ENCODE measurements at regions of chr5 and their contacts with region 1.

Region 1: DNA sequence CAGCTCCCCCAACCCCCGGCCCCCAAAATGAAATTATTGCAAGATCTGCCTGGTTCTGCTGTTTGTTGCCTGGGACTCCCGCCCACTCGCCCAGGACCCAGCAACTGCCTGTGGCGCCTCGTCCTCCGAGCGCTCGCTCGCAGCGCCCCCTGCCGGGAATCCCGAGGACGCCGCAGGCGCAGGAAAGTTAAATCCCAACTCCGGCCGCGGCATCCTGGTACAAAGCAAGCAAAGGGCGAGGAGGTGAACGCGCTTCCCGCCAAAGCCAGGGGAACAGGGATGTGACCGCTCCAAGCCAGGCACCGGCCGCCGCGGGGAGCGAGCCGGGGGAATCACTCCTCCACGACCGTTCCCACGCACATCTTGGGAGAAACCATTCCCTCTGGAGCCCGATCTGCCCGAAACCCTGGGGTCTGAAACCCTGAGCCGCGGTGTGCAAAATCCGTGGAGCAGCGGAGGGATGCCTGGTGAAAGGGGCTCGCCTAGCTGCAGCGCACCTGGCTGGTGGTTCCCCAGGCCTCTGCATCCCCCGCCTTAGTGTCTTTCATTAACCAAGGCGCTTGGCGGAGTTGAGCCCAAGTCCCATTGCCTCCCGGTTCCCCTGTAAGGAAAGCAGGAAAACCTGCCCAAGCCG is 1.3 kb downstream of the SEMA5A start:
- DNase-seq: peak; percentile 80
- ATAC-seq: peak; percentile 48
- H3K4me3 ChIP-seq: peak overlapping the region; percentile 73
- H3K27ac ChIP-seq: peak overlapping the region; percentile 35
- H3K4me1 ChIP-seq: peaks cover 4% of the 10 kb centered on the region
- H3K27me3 ChIP-seq: no peaks in the 10 kb centered on the region
- CTCF ChIP-seq: peak; percentile 96
- POLR2A ChIP-seq: 0 out of 2 replicates have a peak, but pooled peaks have one; percentile 42
- RAD21 ChIP-seq: peak; percentile 91

Region 2: GRCh38 chr5:7927466-7928375 is 1616.9 kb before region 1 on chr5:
- CTCF ChIA-PET with region 1: no interaction called
- POLR2A ChIA-PET with region 1: no interaction called
- dilution Hi-C with region 1: no loop called
- in situ Hi-C with region 1: no loop called
- intact Hi-C with region 1: loop called (anchors 5 kb)
- DNase-seq: peak; percentile 64
- ATAC-seq: peak; percentile 71
- H3K4me3 ChIP-seq: no peak overlapping the region
- H3K27ac ChIP-seq: no peak overlapping the region
- H3K4me1 ChIP-seq: peaks cover 2% of the 10 kb centered on the region
- H3K27me3 ChIP-seq: no peaks in the 10 kb centered on the region
- CTCF ChIP-seq: peak; percentile 74
- POLR2A ChIP-seq: 0 out of 2 replicates have a peak, but pooled peaks have one; percentile 41
- RAD21 ChIP-seq: peak; percentile 86

Region 3: DNA sequence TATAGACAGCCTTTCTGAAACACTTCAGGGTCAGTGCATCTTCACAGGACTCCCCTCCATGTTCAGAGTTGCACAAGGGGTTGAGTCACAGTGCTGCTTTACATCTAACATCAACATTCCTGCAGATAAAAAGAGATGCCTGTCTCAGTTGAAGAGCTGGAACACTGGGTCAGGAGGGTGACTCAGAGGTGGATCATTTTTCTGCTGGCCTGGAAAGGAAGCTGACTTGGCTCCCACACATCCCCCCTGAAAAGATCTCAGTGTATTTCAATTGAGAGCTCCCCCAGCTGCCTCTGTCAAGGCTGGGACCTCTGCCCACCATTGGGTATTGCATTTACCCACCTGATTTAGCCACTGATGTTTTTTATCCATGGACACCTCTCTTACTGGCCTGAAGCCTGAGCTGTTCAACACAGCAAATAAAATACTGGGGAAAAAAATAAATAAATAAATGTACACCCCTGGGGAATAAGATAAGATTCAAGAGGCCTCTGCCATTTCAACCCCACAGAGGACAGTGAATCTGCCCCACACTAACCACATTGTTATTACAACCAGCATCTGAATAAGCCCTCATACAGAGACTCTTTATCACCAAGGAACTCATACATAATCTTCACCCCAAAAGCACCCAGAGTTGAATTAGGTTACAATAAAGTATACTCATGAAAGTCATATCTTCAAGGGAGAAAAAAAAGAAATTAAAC is 715.1 kb before region 1 on chr5:
- CTCF ChIA-PET with region 1: no interaction called
- POLR2A ChIA-PET with region 1: no interaction called
- dilution Hi-C with region 1: no loop called
- in situ Hi-C with region 1: no loop called
- intact Hi-C with region 1: loop called (anchors 5 kb)
- DNase-seq: peak; percentile 100
- ATAC-seq: peak; percentile 89
- H3K4me3 ChIP-seq: no peak overlapping the region
- H3K27ac ChIP-seq: peak overlapping the region; percentile 75
- H3K4me1 ChIP-seq: peaks cover 25% of the 10 kb centered on the region
- H3K27me3 ChIP-seq: no peaks in the 10 kb centered on the region
- CTCF ChIP-seq: no peak
- POLR2A ChIP-seq: no peak
- RAD21 ChIP-seq: 0 out of 2 replicates have a peak, but pooled peaks have one; percentile 1

Region 4: GRCh38 chr5:9239071-9239470 is 305.5 kb before region 1 on chr5:
- CTCF ChIA-PET with region 1: no interaction called
- POLR2A ChIA-PET with region 1: no interaction called
- dilution Hi-C with region 1: no loop called
- in situ Hi-C with region 1: no loop called
- intact Hi-C with region 1: loop called (anchors 2 kb)
- DNase-seq: peak; percentile 32
- ATAC-seq: peak; percentile 51
- H3K4me3 ChIP-seq: no peak overlapping the region
- H3K27ac ChIP-seq: no peak overlapping the region
- H3K4me1 ChIP-seq: peaks cover 1% of the 10 kb centered on the region
- H3K27me3 ChIP-seq: no peaks in the 10 kb centered on the region
- CTCF ChIP-seq: no peak
- POLR2A ChIP-seq: no peak
- RAD21 ChIP-seq: no peak

Region 5: GRCh38 chr5:9765419-9766140 is 221.0 kb after region 1 on chr5:
- CTCF ChIA-PET with region 1: no interaction called
- POLR2A ChIA-PET with region 1: no interaction called
- dilution Hi-C with region 1: no loop called
- in situ Hi-C with region 1: no loop called
- intact Hi-C with region 1: loop called (anchors 2 kb)
- DNase-seq: peak; percentile 93
- ATAC-seq: peak; percentile 61
- H3K4me3 ChIP-seq: no peak overlapping the region
- H3K27ac ChIP-seq: no peak overlapping the region
- H3K4me1 ChIP-seq: peaks cover 4% of the 10 kb centered on the region; the same call in 1 of the 2 replicates
- H3K27me3 ChIP-seq: no peaks in the 10 kb centered on the region
- CTCF ChIP-seq: no peak
- POLR2A ChIP-seq: no peak
- RAD21 ChIP-seq: peak; percentile 31; the same call in 1 of the 2 replicates

Region 6: DNA sequence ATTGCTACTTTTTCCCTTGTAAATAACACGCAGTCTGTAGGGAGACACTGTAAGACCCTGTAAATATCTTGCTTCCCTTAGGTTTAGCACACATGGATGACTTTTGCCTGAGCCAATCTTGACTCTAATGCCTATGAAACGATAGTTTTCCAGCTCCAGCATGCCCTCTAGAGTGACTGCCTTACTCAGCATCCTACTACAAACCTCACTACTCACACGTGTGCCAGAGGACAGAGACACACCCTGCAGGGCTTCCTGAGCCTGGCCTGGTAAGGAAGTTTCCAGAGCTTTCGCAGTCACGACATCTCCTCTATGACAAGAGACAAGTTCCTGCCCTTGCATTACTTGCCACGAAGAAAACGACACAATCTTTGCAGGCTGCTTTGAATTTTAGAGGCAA is 567.0 kb after region 1 on chr5:
- CTCF ChIA-PET with region 1: no interaction called
- POLR2A ChIA-PET with region 1: no interaction called
- dilution Hi-C with region 1: no loop called
- in situ Hi-C with region 1: no loop called
- intact Hi-C with region 1: loop called (anchors 1 kb)
- DNase-seq: peak; percentile 54
- ATAC-seq: peak; percentile 91
- H3K4me3 ChIP-seq: no peak overlapping the region
- H3K27ac ChIP-seq: no peak overlapping the region
- H3K4me1 ChIP-seq: no peaks in the 10 kb centered on the region
- H3K27me3 ChIP-seq: no peaks in the 10 kb centered on the region
- CTCF ChIP-seq: peak; percentile 54
- POLR2A ChIP-seq: no peak
- RAD21 ChIP-seq: peak; percentile 63

Measured in IMR-90 (cell line).